ENCODE measurements at regions of chrX and their contacts with region 1.

Region 1: GRCh38 chrX:46979340-46979739 is 67.1 kb downstream of the JADE3 start:
- DNase-seq: no peak
- H3K4me3 ChIP-seq: no peak overlapping the region
- H3K27ac ChIP-seq: peak overlapping the region; percentile 74
- H3K4me1 ChIP-seq: peaks cover 8% of the 10 kb centered on the region
- H3K27me3 ChIP-seq: no peaks in the 10 kb centered on the region
- CTCF ChIP-seq: no peak

Region 2: DNA sequence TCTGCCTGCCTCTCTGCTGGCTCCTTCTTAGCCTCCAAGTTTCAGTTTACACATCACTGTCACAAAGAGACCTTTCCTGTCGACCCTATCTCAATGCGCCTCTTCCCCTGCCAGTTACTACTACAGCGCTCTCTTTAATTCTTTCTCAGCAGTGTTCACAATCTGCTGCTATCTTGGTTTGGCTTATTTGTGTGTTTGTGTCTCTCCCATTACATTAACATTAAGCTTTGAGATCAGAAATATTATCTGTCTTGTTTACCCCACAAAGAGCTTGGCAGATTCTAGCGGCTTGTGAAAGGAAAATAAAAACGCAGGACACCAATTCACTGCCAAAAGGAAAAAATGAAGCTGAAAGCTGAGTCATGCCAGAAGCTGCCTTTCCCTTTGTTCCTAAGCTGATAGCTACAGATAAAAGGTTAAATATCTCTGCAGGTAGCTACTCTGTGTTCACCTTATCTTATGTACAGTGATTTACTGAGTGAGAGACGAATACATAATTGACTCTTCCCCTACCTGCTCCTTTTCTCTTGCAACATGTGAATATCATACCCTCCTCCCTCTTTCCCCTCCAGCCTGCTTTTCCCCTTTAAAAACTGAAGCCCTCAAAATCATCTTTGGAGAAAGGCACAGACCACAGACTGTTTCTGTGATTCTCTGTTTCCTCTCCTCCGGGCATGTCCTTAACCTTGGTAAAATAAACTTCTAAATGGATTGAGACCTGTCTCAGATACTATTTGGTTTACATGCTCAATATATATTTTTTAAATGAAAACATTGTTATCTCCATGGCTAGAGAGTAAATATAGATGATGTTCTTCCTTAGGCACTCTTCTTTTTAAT is 201.1 kb before region 1 on chrX:
- CTCF ChIA-PET with region 1: interaction called, 12 read pairs
- POLR2A ChIA-PET with region 1: no interaction called
- intact Hi-C with region 1: no loop called
- DNase-seq: peak in 1 of 2 experiments; percentile 54
- H3K4me3 ChIP-seq: no peak overlapping the region
- H3K27ac ChIP-seq: peak overlapping the region; percentile 82
- H3K4me1 ChIP-seq: peaks cover 17% of the 10 kb centered on the region
- H3K27me3 ChIP-seq: no peaks in the 10 kb centered on the region
- CTCF ChIP-seq: no peak